ENCODE measurements at regions of chr6 and their contacts with region 1.

Region 1: DNA sequence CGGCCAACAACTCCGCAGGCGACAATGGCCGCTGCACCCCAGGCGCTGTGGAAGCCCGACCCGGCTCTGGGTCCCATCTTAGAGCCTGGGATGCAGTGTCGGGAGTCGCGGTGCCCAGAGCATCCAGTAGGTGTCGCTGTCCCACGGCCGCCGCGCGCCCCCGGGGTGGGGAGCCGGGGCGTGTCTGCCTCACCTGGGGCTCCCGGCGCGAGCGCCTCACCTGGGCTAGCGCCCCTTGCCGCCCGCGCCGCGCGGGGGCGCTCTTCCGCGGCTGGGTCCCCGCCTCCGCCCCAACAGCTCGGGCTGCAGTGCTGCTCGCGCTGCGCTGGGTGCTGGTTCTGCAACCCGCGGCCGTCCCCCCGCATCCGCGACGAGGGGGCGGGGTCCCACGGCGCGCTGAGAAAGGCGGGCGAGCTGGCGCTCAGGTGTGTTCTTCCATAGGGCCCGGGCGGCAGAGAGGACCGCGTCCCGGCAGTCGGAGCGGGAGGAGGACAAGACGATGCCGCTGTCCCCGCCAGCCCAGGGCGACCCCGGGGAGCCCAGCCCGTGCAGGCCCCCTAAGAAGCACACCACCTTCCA is at the start of gene CRYBG1:
- DNase-seq: peak; percentile 92
- H3K4me3 ChIP-seq: peak within 1 kb of the TSS; percentile 54 to 65
- H3K27ac ChIP-seq: no peak within 1 kb of the TSS
- H3K4me1 ChIP-seq: peaks cover 0 to 12% of the 10 kb centered on the region in 2 experiments; a peak in 1 of 4 replicates
- H3K27me3 ChIP-seq: peaks cover 21% of the 10 kb centered on the region; the same call in 1 of the 2 replicates
- CTCF ChIP-seq: peak; percentile 88
- EP300 ChIP-seq: no peak
- RAD21 ChIP-seq: peak; percentile 22; the same call in 1 of the 2 replicates
- polyA plus RNA-seq, gene CRYBG1: 13.8 and 14.9 TPM in 2 replicates

Region 2: GRCh38 chr6:105243487-105243886 is 1117.0 kb before region 1 on chr6:
- CTCF ChIA-PET with region 1: no interaction called
- POLR2A ChIA-PET with region 1: no interaction called
- DNase-seq: no peak
- H3K4me3 ChIP-seq: no peak overlapping the region
- H3K27ac ChIP-seq: no peak overlapping the region
- H3K4me1 ChIP-seq: no peaks in the 10 kb centered on the region
- H3K27me3 ChIP-seq: no peaks in the 10 kb centered on the region
- CTCF ChIP-seq: no peak
- EP300 ChIP-seq: no peak
- RAD21 ChIP-seq: no peak

Region 3: GRCh38 chr6:106347341-106347740 is 13.2 kb before region 1 on chr6:
- CTCF ChIA-PET with region 1: interaction called, 28 read pairs
- POLR2A ChIA-PET with region 1: no interaction called
- DNase-seq: no peak
- H3K4me3 ChIP-seq: no peak overlapping the region
- H3K27ac ChIP-seq: no peak overlapping the region
- H3K4me1 ChIP-seq: no peaks in the 10 kb centered on the region
- H3K27me3 ChIP-seq: no peaks in the 10 kb centered on the region
- CTCF ChIP-seq: no peak
- EP300 ChIP-seq: no peak
- RAD21 ChIP-seq: no peak

Region 4: DNA sequence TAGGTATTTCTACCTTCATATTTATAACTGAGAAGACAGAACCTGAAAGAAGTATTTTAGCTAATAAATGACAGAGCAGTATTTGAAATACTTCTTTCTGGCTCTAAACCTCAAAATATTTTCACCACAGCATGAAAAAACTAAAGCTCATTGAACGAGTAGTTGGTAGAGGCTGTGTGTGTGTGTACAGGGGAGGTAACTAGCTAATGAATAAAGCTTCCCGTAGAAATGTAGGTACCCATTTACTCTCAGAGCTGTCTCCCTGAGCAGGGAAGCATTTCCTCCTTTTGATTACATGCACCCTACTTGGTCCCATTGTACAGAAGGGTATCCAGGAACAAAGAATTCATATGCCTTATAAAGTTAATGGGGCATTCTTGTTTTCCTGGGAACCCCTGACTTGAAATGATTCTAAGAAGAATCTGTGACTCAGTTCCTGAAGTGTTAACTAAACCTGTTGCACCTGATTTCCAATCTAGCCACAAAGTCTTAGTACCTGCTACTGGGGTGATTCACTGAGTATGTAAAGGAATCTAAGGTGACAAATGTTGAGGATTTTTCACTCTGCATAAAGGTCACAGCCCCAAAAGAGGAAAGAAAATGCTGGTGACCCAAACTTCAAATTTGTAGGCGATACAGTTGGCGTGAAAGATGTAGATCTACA is 12.5 kb after region 1 on chr6:
- CTCF ChIA-PET with region 1: interaction called, 38 read pairs
- POLR2A ChIA-PET with region 1: no interaction called
- DNase-seq: no peak
- H3K4me3 ChIP-seq: no peak overlapping the region
- H3K27ac ChIP-seq: no peak overlapping the region
- H3K4me1 ChIP-seq: peaks cover 2 to 3% of the 10 kb centered on the region in 2 experiments; a peak in 2 of 4 replicates
- H3K27me3 ChIP-seq: no peaks in the 10 kb centered on the region
- CTCF ChIP-seq: no peak
- EP300 ChIP-seq: no peak
- RAD21 ChIP-seq: no peak